CD4-positive, alpha-beta memory T cell (primary cell): ENCODE measurements at regions of chr15 and their contacts with region 1.

Region 1: DNA sequence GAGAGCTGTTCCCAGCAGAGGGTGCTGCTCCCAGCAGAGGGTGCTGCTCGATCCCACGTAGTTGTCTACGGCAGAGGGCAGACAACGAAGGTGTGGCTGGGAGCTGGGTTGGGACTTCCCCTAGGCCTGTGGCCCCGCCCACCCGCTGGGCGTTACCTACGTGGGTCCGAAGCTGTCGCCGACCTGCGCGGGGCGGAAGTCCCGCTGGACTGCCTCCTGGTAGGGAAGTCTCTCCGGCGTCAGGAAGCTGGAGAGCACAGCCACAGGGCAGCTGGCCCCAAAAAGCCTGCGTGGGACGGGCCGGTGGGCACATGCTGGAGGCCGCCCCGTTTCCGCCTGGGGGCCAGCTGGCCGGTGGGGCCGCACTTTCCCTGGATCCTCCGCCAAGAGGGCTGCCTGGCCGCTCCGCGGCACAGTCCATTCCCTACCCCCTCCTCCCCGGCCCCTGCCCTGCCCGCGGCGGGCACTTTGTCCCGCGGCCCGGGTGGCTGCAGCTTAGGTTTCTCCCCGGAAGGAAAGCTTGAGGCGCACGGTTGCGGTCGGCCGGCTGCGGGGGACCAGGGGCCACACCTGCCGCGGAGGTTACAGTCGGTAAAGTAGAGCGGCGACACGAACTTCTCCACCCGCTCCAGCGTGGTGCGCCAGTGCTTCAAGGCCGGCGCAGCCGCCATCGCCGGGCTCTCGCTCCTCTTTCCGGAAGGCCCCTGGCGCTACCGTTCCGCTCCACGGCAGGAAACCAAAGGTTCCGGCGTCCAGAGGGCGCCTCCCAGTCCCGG is at the start of gene MAN2C1:
- DNase-seq: peak; percentile 86 to 92 (median 87)
- H3K4me3 ChIP-seq: peak within 1 kb of the TSS; percentile 86 to 95
- H3K4me3 Mint-ChIP-seq: peak within 1 kb of the TSS; percentile 89 to 95 (median 92)
- H3K27ac ChIP-seq: peak within 1 kb of the TSS; percentile 93
- H3K27ac Mint-ChIP-seq: peak within 1 kb of the TSS; percentile 95 to 97 (median 96)
- H3K4me1 ChIP-seq: peaks cover 25% of the 10 kb centered on the region
- H3K4me1 Mint-ChIP-seq: peaks cover 7 to 37% (median 24%) of the 10 kb centered on the region in 4 donors
- H3K27me3 ChIP-seq: no peaks in the 10 kb centered on the region
- H3K27me3 Mint-ChIP-seq: no peaks in the 10 kb centered on the region
- total RNA-seq, gene MAN2C1: 448 to 449 TPM

Region 2: DNA sequence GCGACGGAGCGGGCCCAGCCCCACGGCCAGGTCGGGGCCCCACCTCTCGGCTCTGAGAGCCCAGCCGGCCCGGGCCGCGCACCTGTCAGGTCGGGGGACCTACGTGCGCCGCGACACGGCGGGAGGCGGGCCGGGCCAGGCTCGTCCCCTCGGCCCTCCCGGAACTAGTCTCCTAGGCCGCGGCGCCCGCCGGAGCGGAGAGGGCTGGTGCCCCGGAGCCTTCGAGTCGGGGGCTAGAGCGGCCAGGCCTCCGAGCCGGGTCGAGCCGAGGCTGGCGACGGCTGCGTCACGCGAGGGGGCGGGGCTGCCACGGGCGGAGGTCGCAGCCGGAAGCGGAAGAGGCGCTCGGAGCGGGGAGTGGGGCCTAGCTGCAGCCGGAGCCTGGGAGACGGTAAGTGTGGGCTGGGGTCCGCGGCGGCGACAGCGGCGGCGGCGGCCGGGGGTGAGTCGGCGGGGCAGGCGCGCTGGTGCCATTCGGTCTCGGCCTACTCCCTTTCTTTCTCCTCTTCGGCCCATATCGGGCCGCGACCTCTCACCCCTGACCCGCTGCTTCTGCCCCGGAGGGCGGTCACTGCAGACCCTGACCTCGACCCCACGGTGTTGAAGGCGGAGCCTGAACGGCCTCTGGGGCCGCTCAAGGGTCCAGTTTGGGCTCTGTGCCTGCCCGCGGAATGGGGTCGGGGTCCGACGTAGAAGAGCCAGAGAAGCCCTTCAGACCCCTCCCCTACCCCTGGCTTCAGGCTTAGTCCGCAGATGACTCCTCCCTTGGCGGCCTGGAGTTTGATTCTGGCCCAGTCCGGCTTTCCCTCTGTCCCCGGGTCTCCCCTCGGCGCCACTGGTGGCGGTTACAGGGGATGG is 752.4 kb before region 1 on chr15 and contains the start of gene CLK3:
- CTCF ChIA-PET with region 1: no interaction called
- POLR2A ChIA-PET with region 1: interaction called, 14 read pairs
- intact Hi-C with region 1: no loop called
- DNase-seq: peak; percentile 95 to 97 (median 96)
- H3K4me3 ChIP-seq: peak within 1 kb of the TSS; percentile 98 to 100
- H3K4me3 Mint-ChIP-seq: peak within 1 kb of the TSS; percentile 92 to 98 (median 94)
- H3K27ac ChIP-seq: peak within 1 kb of the TSS; percentile 99
- H3K27ac Mint-ChIP-seq: peak within 1 kb of the TSS; percentile 98 to 99 (median 98)
- H3K4me1 ChIP-seq: peaks cover 44% of the 10 kb centered on the region
- H3K4me1 Mint-ChIP-seq: peaks cover 28 to 59% (median 31%) of the 10 kb centered on the region in 4 donors
- H3K27me3 ChIP-seq: no peaks in the 10 kb centered on the region
- H3K27me3 Mint-ChIP-seq: no peaks in the 10 kb centered on the region
- total RNA-seq, gene CLK3: 163 to 167 TPM

Region 3: GRCh38 chr15:75249726-75250125 is 118.4 kb before region 1 on chr15:
- CTCF ChIA-PET with region 1: no interaction called
- POLR2A ChIA-PET with region 1: no interaction called
- intact Hi-C with region 1: no loop called
- DNase-seq: no peak
- H3K4me3 ChIP-seq: no peak overlapping the region
- H3K4me3 Mint-ChIP-seq: no peak overlapping the region
- H3K27ac ChIP-seq: no peak overlapping the region
- H3K27ac Mint-ChIP-seq: no peak overlapping the region
- H3K4me1 ChIP-seq: no peaks in the 10 kb centered on the region
- H3K4me1 Mint-ChIP-seq: no peaks in the 10 kb centered on the region
- H3K27me3 ChIP-seq: no peaks in the 10 kb centered on the region
- H3K27me3 Mint-ChIP-seq: peaks cover 8 to 13% of the 10 kb centered on the region in 2 donors

Region 4: GRCh38 chr15:75347222-75347878 is 20.8 kb before region 1 on chr15:
- CTCF ChIA-PET with region 1: interaction called, 8 read pairs
- POLR2A ChIA-PET with region 1: interaction called, 148 read pairs
- intact Hi-C with region 1: loop called (anchors 1 kb)
- DNase-seq: peak; percentile 66 to 75 (median 70)
- H3K4me3 ChIP-seq: peak overlapping the region; percentile 30 to 72
- H3K4me3 Mint-ChIP-seq: peak overlapping the region; percentile 75 to 93 (median 86)
- H3K27ac ChIP-seq: peak overlapping the region; percentile 58
- H3K27ac Mint-ChIP-seq: peak overlapping the region; percentile 84 to 94 (median 86)
- H3K4me1 ChIP-seq: peaks cover 36% of the 10 kb centered on the region
- H3K4me1 Mint-ChIP-seq: peaks cover 14 to 38% (median 26%) of the 10 kb centered on the region in 4 donors
- H3K27me3 ChIP-seq: no peaks in the 10 kb centered on the region
- H3K27me3 Mint-ChIP-seq: no peaks in the 10 kb centered on the region

Region 5: GRCh38 chr15:75446151-75446550 is 78.0 kb after region 1 on chr15:
- CTCF ChIA-PET with region 1: interaction called, 62 read pairs
- POLR2A ChIA-PET with region 1: interaction called, 222 read pairs
- intact Hi-C with region 1: loop called (anchors 1 kb)
- DNase-seq: peak in 4 of 5 donors; percentile 15 to 48 (median 22)
- H3K4me3 ChIP-seq: no peak overlapping the region
- H3K4me3 Mint-ChIP-seq: peak overlapping the region; percentile 10 to 83 (median 58)
- H3K27ac ChIP-seq: no peak overlapping the region
- H3K27ac Mint-ChIP-seq: peak overlapping the region; percentile 1 to 76 (median 46)
- H3K4me1 ChIP-seq: peaks cover 78% of the 10 kb centered on the region
- H3K4me1 Mint-ChIP-seq: peaks cover 36 to 67% (median 56%) of the 10 kb centered on the region in 4 donors
- H3K27me3 ChIP-seq: no peaks in the 10 kb centered on the region
- H3K27me3 Mint-ChIP-seq: no peaks in the 10 kb centered on the region

Region 6: GRCh38 chr15:75625542-75626347 is 257.6 kb after region 1 on chr15 and contains the start of gene SNUPN:
- CTCF ChIA-PET with region 1: interaction called, 29 read pairs
- POLR2A ChIA-PET with region 1: interaction called, 61 read pairs
- intact Hi-C with region 1: loop called (anchors 1 kb)
- DNase-seq: peak; percentile 88 to 94 (median 89)
- H3K4me3 ChIP-seq: peak within 1 kb of the TSS; percentile 94 to 99
- H3K4me3 Mint-ChIP-seq: peak within 1 kb of the TSS; percentile 91 to 97 (median 94)
- H3K27ac ChIP-seq: peak within 1 kb of the TSS; percentile 97
- H3K27ac Mint-ChIP-seq: peak within 1 kb of the TSS; percentile 96 to 99 (median 98)
- H3K4me1 ChIP-seq: peaks cover 22% of the 10 kb centered on the region
- H3K4me1 Mint-ChIP-seq: peaks cover 14 to 35% (median 24%) of the 10 kb centered on the region in 4 donors
- H3K27me3 ChIP-seq: no peaks in the 10 kb centered on the region
- H3K27me3 Mint-ChIP-seq: no peaks in the 10 kb centered on the region
- total RNA-seq, gene SNUPN: 21.0 to 23.5 TPM

Region 7: GRCh38 chr15:75684642-75685041 is 316.5 kb after region 1 on chr15:
- CTCF ChIA-PET with region 1: interaction called, 23 read pairs
- POLR2A ChIA-PET with region 1: interaction called, 7 read pairs
- intact Hi-C with region 1: no loop called
- DNase-seq: no peak
- H3K4me3 ChIP-seq: no peak overlapping the region
- H3K4me3 Mint-ChIP-seq: no peak overlapping the region
- H3K27ac ChIP-seq: no peak overlapping the region
- H3K27ac Mint-ChIP-seq: no peak overlapping the region
- H3K4me1 ChIP-seq: no peaks in the 10 kb centered on the region
- H3K4me1 Mint-ChIP-seq: no peaks in the 10 kb centered on the region
- H3K27me3 ChIP-seq: no peaks in the 10 kb centered on the region
- H3K27me3 Mint-ChIP-seq: peaks cover 0 to 3% of the 10 kb centered on the region in 2 donors